K562 (cell line): ENCODE measurements at regions of chr17 and their contacts with region 1.

Region 1: DNA sequence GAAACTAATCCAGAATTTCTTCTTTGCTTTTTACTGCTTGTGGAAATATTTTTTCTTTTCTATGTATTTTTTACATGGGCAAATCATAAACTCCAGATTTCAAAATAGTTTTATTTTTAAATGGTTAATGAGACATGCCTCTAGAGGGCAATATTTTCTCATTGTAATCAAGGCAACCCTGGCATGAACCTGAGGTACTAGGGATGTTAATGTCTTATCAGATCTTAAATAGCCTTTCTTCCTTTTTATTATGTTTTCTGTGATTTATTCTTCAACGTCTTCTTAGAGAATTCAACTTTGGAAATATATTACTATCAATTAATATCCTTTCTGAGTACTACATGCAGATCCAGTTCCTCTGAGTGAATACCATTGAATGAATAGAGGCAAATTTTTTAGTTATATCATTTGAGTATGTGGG is 324.7 kb downstream of the BCAS3 start:
- DNase-seq: peak; percentile 5 to 15 (median 7)
- ATAC-seq: no peak
- H3K4me3 ChIP-seq: no peak overlapping the region
- H3K27ac ChIP-seq: no peak overlapping the region
- H3K4me1 ChIP-seq: no peaks in the 10 kb centered on the region
- H3K27me3 ChIP-seq: no peaks in the 10 kb centered on the region
- CTCF ChIP-seq: peak; percentile 16 to 71 (median 24); a peak in 3 of 6 replicates
- EP300 ChIP-seq: no peak
- POLR2A ChIP-seq: no peak
- RAD21 ChIP-seq: peak; percentile 69 to 78

Region 2: DNA sequence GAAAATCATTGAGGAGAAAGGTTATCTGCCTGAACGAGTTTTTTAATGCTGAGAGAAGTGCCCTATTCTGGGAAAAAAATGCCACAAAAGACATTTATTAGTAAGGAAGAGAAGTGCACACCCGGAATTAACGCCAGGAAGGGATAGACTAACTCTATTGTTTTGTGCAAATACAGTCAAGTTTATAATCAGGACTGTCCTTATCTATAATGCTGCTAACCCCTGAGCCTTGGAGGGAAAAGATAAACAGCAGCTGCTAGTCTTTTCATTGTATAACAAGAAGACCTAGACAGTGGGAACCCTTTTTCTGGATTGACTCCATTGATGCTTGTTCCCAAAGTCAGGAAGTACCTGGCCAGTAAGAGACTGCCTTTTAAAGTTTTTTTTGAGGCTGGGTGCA is 298.2 kb before region 1 on chr17:
- CTCF ChIA-PET with region 1: no interaction called
- POLR2A ChIA-PET with region 1: no interaction called
- in situ Hi-C with region 1: no loop called
- intact Hi-C with region 1: no loop called
- DNase-seq: no peak
- ATAC-seq: no peak
- H3K4me3 ChIP-seq: no peak overlapping the region
- H3K27ac ChIP-seq: no peak overlapping the region
- H3K4me1 ChIP-seq: peaks cover 0 to 2% of the 10 kb centered on the region in 2 experiments; a peak in 2 of 5 replicates
- H3K27me3 ChIP-seq: peaks cover 0 to 8% of the 10 kb centered on the region in 2 experiments; a peak in 2 of 5 replicates
- CTCF ChIP-seq: no peak
- EP300 ChIP-seq: no peak
- POLR2A ChIP-seq: no peak
- RAD21 ChIP-seq: no peak

Region 3: DNA sequence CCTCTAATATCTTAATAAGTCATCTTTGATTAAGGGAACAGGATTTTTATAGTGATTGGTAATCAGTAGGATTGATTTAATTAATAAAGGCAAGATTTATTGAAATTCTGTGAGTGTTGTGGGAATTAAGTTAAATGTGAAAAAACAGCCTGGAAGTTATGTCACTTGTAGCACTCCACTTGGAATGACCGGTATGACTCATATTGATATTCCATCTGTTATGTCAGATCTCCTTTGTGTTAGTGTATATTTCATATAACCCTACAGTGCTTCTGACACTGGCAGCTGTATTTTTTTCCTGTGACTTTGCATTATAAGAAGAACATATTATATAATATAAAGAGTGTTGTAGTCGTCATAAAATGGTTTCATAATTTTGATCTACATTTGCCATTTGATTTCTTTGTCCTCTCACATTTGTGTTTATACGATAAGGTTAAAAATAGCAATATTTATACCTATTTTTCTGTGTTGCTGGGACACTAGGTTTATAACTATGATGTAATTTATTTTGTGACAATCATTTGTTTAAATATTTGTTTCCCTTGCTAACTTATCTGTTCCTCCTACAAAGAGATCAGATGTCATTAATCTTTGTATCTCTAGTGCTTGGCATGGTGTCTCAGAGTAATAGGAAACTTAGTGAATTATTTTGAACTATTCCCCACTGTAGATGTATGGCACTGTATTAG is 75.7 kb before region 1 on chr17:
- CTCF ChIA-PET with region 1: no interaction called
- POLR2A ChIA-PET with region 1: no interaction called
- in situ Hi-C with region 1: no loop called
- intact Hi-C with region 1: no loop called
- DNase-seq: no peak
- ATAC-seq: no peak
- H3K4me3 ChIP-seq: no peak overlapping the region
- H3K27ac ChIP-seq: no peak overlapping the region
- H3K4me1 ChIP-seq: no peaks in the 10 kb centered on the region
- H3K27me3 ChIP-seq: no peaks in the 10 kb centered on the region
- CTCF ChIP-seq: no peak
- EP300 ChIP-seq: no peak
- POLR2A ChIP-seq: no peak
- RAD21 ChIP-seq: no peak

Region 4: GRCh38 chr17:61088553-61088952 is 86.2 kb after region 1 on chr17:
- CTCF ChIA-PET with region 1: no interaction called
- POLR2A ChIA-PET with region 1: no interaction called
- in situ Hi-C with region 1: no loop called
- intact Hi-C with region 1: no loop called
- DNase-seq: no peak
- ATAC-seq: no peak
- H3K4me3 ChIP-seq: no peak overlapping the region
- H3K27ac ChIP-seq: no peak overlapping the region
- H3K4me1 ChIP-seq: no peaks in the 10 kb centered on the region; a peak in 2 of 5 replicates
- H3K27me3 ChIP-seq: no peaks in the 10 kb centered on the region; a peak in 1 of 5 replicates
- CTCF ChIP-seq: no peak
- EP300 ChIP-seq: no peak
- POLR2A ChIP-seq: no peak
- RAD21 ChIP-seq: no peak

Region 5: GRCh38 chr17:61139219-61139618 is 136.9 kb after region 1 on chr17:
- CTCF ChIA-PET with region 1: no interaction called
- POLR2A ChIA-PET with region 1: no interaction called
- in situ Hi-C with region 1: no loop called
- intact Hi-C with region 1: no loop called
- DNase-seq: no peak
- ATAC-seq: no peak
- H3K4me3 ChIP-seq: no peak overlapping the region
- H3K27ac ChIP-seq: no peak overlapping the region
- H3K4me1 ChIP-seq: peaks cover 3 to 4% of the 10 kb centered on the region in 2 experiments; a peak in 4 of 5 replicates
- H3K27me3 ChIP-seq: peaks cover 2 to 18% of the 10 kb centered on the region in 2 experiments; a peak in 3 of 5 replicates
- CTCF ChIP-seq: no peak
- EP300 ChIP-seq: no peak
- POLR2A ChIP-seq: no peak
- RAD21 ChIP-seq: no peak

Region 6: DNA sequence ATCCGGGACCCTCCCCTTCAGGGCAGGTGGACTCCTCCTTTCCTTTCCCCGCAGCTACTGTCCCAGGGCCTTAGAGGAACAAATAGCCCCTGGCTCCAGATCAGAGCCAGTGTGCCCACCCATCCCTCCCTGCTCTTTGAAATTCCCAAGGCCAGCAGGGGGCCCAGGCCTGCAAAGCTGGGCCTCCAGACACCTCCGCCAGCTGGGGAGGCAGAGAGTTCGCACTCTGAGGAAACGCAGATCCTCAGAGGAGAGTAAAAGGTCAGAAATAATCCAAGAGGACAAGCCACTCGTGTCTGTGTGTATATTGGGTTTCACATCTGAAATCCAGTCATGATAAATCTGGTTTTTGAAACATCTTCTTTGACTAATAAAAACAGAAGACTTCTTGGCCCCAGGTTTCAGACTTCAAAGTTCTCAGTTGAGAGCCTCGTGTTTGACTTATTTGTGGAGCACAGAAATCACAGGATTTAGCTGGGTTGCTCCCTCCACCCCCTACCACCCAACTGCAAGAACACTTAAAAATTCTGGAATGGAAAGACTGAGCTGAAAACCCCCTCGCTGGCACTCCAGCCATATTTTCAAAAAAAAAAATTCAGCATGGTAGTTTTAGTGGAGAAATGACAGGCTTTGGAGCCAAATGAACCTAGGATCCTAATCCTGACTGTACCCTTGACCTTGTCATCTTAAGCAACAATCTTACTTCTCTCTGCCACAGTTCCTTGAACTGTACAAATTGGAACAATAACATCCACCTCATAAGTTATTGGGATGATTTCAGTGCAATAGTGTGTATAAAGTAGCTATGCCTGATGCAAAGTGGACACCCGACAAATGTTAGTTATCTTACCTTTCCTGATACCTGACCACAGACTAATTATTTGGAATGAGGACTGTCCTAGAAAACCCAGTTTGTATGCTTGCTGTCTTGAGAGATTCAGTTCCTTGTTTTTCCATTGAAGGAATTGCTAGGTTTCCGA is 352.9 kb after region 1 on chr17:
- CTCF ChIA-PET with region 1: interaction called, 3 read pairs
- POLR2A ChIA-PET with region 1: no interaction called
- in situ Hi-C with region 1: no loop called
- intact Hi-C with region 1: loop called (anchors 5 kb)
- DNase-seq: no peak
- ATAC-seq: no peak
- H3K4me3 ChIP-seq: no peak overlapping the region
- H3K27ac ChIP-seq: no peak overlapping the region
- H3K4me1 ChIP-seq: no peaks in the 10 kb centered on the region
- H3K27me3 ChIP-seq: peaks cover 12 to 51% of the 10 kb centered on the region in 2 experiments; a peak in 4 of 5 replicates
- CTCF ChIP-seq: peak in 1 of 3 experiments; percentile 32; a peak in 2 of 6 replicates
- EP300 ChIP-seq: no peak
- POLR2A ChIP-seq: no peak
- RAD21 ChIP-seq: no peak